Colonic mucosa (tissue), 4 donors: ENCODE measurements at regions of chr14 and their contacts with region 1.

Region 1: DNA sequence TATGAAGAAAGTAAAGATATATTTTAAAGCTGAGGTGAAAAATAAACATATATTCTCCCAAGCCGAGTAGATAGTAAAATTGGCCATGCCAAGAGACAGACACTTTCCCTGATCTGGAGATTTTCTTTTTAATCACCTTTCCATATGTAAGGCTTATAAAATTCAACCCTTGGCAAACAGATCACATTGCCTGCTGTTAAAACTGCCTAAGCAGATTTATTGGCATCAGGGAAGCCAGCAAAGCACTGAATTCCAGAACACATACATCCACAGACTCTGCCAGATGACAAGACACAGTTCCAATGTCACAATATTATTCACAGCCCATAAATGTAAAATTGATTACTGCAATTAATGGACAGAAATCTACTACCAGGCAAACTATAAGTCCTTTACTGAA is 78.2 kb upstream of the GARIN2 start:
- DNase-seq: no peak
- H3K4me3 ChIP-seq: no peak overlapping the region
- H3K27ac ChIP-seq: no peak overlapping the region
- H3K4me1 ChIP-seq: no peaks in the 10 kb centered on the region
- H3K27me3 ChIP-seq: no peaks in the 10 kb centered on the region
- CTCF ChIP-seq: no peak

Region 2: DNA sequence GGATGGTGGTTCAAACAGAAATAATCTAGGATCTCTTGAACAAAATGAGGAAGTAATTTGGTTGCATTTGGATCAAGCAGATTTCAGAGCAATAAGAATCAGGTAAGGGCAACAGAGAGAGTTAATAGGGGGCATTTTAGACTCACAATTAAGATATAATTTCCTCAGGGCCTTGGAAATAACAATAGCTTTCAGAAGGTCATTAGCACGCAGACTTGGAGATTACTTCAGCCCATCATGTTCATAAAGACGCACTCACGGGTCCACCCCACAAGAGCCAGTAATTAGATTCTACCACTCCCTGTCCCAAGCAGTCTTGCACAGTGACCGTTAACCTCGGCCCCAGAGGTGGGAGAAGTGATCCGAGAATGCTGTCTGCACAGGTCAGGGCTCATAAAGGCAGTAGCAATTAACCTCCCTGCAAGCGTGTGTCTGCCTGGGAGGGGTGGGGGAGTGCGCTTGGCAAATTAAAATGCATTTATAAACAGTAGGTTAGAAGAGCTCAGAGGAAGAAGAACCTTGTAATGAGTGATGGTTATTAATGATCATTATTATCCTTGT is 750.6 kb before region 1 on chr14:
- intact Hi-C with region 1: loop called (anchors 10 kb)
- DNase-seq: no peak
- H3K4me3 ChIP-seq: no peak overlapping the region
- H3K27ac ChIP-seq: no peak overlapping the region
- H3K4me1 ChIP-seq: no peaks in the 10 kb centered on the region
- H3K27me3 ChIP-seq: no peaks in the 10 kb centered on the region
- CTCF ChIP-seq: no peak

Region 3: GRCh38 chr14:66495218-66496098 is 615.6 kb before region 1 on chr14:
- intact Hi-C with region 1: loop called (anchors 10 kb)
- DNase-seq: peak; percentile 60
- H3K4me3 ChIP-seq: no peak overlapping the region
- H3K27ac ChIP-seq: no peak overlapping the region
- H3K4me1 ChIP-seq: no peaks in the 10 kb centered on the region
- H3K27me3 ChIP-seq: no peaks in the 10 kb centered on the region
- CTCF ChIP-seq: peak; percentile 80

Region 4: DNA sequence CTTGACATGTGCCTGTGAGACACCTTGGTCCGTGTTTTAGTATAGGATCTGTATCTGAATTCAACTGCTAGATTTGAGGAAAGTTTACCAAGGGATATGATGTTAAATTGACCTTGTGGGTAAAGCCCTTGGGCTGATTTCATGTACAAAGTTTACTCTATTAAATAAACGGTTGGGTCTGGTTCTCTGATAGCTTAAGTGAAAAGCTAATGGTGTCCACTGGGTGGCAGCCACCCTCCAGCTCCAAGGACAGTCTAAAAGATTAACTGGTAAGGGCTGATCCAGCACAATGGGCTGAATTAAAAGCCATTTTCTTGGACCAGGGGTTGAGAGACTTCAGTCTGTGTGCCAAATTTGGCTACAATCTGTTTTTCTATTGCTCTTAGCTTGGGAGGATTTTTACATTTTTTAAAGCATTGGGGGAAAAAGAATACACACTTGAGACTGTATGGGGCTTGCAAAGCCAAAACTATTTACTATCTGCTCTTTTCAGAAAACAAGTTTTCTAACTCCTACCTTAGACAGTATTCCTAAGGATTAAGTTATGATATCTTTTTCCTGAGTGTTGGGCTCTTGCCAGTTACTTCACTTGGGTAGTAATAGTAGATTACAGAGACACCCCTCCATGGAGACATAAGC is 486.6 kb before region 1 on chr14:
- intact Hi-C with region 1: loop called (anchors 10 kb)
- DNase-seq: peak; percentile 37
- H3K4me3 ChIP-seq: no peak overlapping the region
- H3K27ac ChIP-seq: no peak overlapping the region
- H3K4me1 ChIP-seq: no peaks in the 10 kb centered on the region
- H3K27me3 ChIP-seq: no peaks in the 10 kb centered on the region
- CTCF ChIP-seq: peak; percentile 46

Region 5: DNA sequence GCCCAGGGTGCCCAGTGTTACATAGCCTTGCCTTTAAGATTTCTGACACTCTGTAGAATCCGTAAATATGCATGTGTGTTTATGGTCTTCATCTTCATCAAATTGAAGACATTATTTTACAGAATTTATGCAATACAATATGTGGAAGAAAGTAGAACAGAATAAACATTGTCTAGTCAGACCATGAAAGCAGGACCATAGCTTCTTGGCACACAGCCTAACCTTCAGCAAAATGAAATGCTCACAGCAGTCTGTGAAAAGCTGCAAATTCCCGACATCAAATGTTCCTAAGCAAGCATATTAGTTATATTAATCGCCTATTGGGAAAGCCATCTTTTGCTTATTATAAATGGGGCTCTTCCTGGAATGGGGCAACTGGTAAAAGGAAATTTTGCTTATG is 33.1 kb before region 1 on chr14:
- intact Hi-C with region 1: no loop called
- DNase-seq: no peak
- H3K4me3 ChIP-seq: no peak overlapping the region
- H3K27ac ChIP-seq: no peak overlapping the region
- H3K4me1 ChIP-seq: no peaks in the 10 kb centered on the region
- H3K27me3 ChIP-seq: no peaks in the 10 kb centered on the region
- CTCF ChIP-seq: no peak